Naive thymus-derived CD4-positive, alpha-beta T cell (primary cell): ENCODE measurements at regions of chr6 and their contacts with region 1.

Region 1: DNA sequence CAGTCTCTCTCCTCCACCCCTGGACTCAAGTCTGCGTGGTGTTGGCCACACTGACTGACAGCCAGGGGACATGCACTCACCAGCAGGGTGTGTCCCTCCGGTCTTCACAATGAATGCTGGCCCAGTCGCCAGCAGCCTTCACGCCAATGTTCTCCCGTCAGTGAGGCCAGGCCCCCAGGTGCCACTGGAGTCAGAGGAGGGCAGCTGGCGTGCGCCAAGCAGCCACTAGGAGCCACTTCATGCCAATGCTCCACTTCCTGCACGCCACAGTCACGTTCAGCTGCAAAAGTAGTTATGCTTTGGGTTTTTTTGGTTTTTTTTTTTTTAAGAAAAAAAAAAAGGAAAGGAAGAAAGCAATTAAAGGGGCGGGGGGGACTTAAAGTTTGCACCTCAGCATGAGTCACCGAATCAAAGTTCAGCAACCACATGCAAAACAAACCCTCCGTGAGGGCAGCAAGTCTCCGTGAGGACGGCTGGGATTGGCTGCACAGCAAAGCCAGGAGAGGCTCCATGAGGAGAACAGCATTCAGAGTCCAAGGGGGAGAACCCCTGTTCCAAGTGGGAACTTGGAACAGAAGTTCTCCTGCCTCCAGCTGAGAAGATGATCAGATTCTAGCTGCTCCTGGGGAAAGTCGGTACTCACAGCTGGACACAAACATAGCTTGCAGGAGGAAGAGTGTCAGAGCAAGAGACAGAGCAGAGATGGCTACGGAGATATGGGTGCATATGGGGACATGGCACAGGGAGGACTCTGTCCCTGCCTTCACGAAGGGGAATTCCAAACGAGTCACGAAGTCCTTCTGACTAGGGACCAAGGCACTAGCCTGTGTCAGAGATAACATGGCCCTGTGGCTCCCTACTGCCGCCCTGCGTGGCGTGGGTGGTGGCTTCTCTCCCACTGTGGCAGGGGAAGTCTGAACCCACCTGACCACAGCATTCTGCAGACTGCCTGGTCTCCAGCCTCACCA is at the start of gene ZC3H12D:
- DNase-seq: peak; percentile 65 to 85 (median 79)
- ATAC-seq: peak; percentile 83
- H3K4me3 ChIP-seq: peak within 1 kb of the TSS; percentile 57
- H3K4me3 Mint-ChIP-seq: peak within 1 kb of the TSS; percentile 85 to 95 (median 92)
- H3K27ac ChIP-seq: peak within 1 kb of the TSS; percentile 90
- H3K27ac Mint-ChIP-seq: peak within 1 kb of the TSS; percentile 94 to 100 (median 98)
- H3K4me1 ChIP-seq: peaks cover 25 to 41% of the 10 kb centered on the region in 2 donors
- H3K4me1 Mint-ChIP-seq: peaks cover 34 to 68% (median 57%) of the 10 kb centered on the region in 7 donors
- H3K27me3 ChIP-seq: no peaks in the 10 kb centered on the region
- H3K27me3 Mint-ChIP-seq: no peaks in the 10 kb centered on the region
- total RNA-seq, gene ZC3H12D: 30.1 to 85.6 (median 74.1) TPM

Region 2: DNA sequence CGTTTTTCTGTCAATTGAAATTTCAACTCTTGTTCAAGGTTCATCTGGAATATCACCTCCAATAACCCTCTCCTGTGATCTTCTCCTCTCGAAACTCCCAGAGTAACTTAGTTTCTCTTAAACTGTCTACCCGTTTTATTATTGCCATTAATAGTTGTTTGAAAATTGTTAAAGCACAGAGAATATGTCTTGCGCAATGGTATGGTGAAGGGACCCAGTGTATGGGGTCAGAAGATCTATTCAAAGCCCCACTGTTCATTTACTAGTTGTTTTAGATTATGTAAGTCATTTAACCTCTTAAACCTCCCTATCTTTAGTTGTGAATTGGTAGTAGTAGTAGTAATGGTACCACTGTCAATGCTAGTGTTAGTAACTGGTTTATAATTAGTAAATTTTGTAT is 173.7 kb before region 1 on chr6:
- CTCF ChIA-PET with region 1: no interaction called
- POLR2A ChIA-PET with region 1: no interaction called
- intact Hi-C with region 1: no loop called
- DNase-seq: no peak
- ATAC-seq: no peak
- H3K4me3 ChIP-seq: no peak overlapping the region
- H3K4me3 Mint-ChIP-seq: no peak overlapping the region
- H3K27ac ChIP-seq: no peak overlapping the region
- H3K27ac Mint-ChIP-seq: no peak overlapping the region
- H3K4me1 ChIP-seq: peaks cover 2 to 3% of the 10 kb centered on the region in 2 donors
- H3K4me1 Mint-ChIP-seq: peaks cover 3 to 28% (median 15%) of the 10 kb centered on the region in 7 donors
- H3K27me3 ChIP-seq: no peaks in the 10 kb centered on the region
- H3K27me3 Mint-ChIP-seq: no peaks in the 10 kb centered on the region

Region 3: GRCh38 chr6:149499066-149499465 is 14.0 kb after region 1 on chr6:
- CTCF ChIA-PET with region 1: interaction called, 22 read pairs
- POLR2A ChIA-PET with region 1: interaction called, 4 read pairs
- intact Hi-C with region 1: loop called (anchors 1 kb)
- DNase-seq: no peak
- ATAC-seq: no peak
- H3K4me3 ChIP-seq: no peak overlapping the region
- H3K4me3 Mint-ChIP-seq: no peak overlapping the region
- H3K27ac ChIP-seq: no peak overlapping the region
- H3K27ac Mint-ChIP-seq: peak overlapping the region in 8 of 9 donors; percentile 14 to 100 (median 80)
- H3K4me1 ChIP-seq: peaks cover 12 to 33% of the 10 kb centered on the region in 2 donors
- H3K4me1 Mint-ChIP-seq: peaks cover 18 to 68% (median 58%) of the 10 kb centered on the region in 7 donors
- H3K27me3 ChIP-seq: no peaks in the 10 kb centered on the region
- H3K27me3 Mint-ChIP-seq: no peaks in the 10 kb centered on the region

Region 4: GRCh38 chr6:149508485-149508884 is 23.5 kb after region 1 on chr6:
- CTCF ChIA-PET with region 1: interaction called, 14 read pairs
- POLR2A ChIA-PET with region 1: no interaction called
- intact Hi-C with region 1: loop called (anchors 1 kb)
- DNase-seq: peak in 7 of 9 donors; percentile 54 to 86 (median 73)
- ATAC-seq: peak; percentile 98
- H3K4me3 ChIP-seq: no peak overlapping the region
- H3K4me3 Mint-ChIP-seq: peak overlapping the region in 9 of 10 donors; percentile 39 to 77 (median 64)
- H3K27ac ChIP-seq: peak overlapping the region; percentile 73
- H3K27ac Mint-ChIP-seq: peak overlapping the region; percentile 86 to 97 (median 90)
- H3K4me1 ChIP-seq: peaks cover 11 to 17% of the 10 kb centered on the region in 2 donors
- H3K4me1 Mint-ChIP-seq: peaks cover 11 to 51% (median 40%) of the 10 kb centered on the region in 7 donors
- H3K27me3 ChIP-seq: no peaks in the 10 kb centered on the region
- H3K27me3 Mint-ChIP-seq: no peaks in the 10 kb centered on the region